ENCODE measurements at regions of chr7 and their contacts with region 1.

Region 1: GRCh38 chr7:128425850-128426249 is 16.1 kb upstream of the IMPDH1 start:
- DNase-seq: peak in 1 of 2 experiments; percentile 97
- H3K4me3 ChIP-seq: no peak overlapping the region
- H3K27ac ChIP-seq: no peak overlapping the region
- H3K4me1 ChIP-seq: peaks cover 0 to 3% (median 0%) of the 10 kb centered on the region in 4 experiments; a peak in 1 of 7 replicates
- H3K27me3 ChIP-seq: no peaks in the 10 kb centered on the region
- CTCF ChIP-seq: peak; percentile 92 to 95 (median 93)
- EP300 ChIP-seq: no peak
- POLR2A ChIP-seq: no peak
- RAD21 ChIP-seq: peak; percentile 86 to 88

Region 2: GRCh38 chr7:128343554-128344430 is 82.1 kb before region 1 on chr7 and contains the start of gene RBM28:
- CTCF ChIA-PET with region 1: interaction called, 71 read pairs
- POLR2A ChIA-PET with region 1: interaction called, 4 read pairs
- DNase-seq: peak; percentile 65 to 95
- H3K4me3 ChIP-seq: peak within 1 kb of the TSS; percentile 67 to 90 (median 88)
- H3K27ac ChIP-seq: peak within 1 kb of the TSS; percentile 90
- H3K4me1 ChIP-seq: peaks cover 0 to 5% (median 4%) of the 10 kb centered on the region in 4 experiments; a peak in 3 of 7 replicates
- H3K27me3 ChIP-seq: peaks cover under 1 to 7% (median 2%) of the 10 kb centered on the region in 4 experiments; a peak in 6 of 7 replicates
- CTCF ChIP-seq: no peak
- EP300 ChIP-seq: no peak
- POLR2A ChIP-seq: peak; percentile 85 to 91
- RAD21 ChIP-seq: 0 out of 4 replicates have a peak, but pooled peaks of 1 of the 2 experiments have one; percentile 9
- total RNA-seq, gene RBM28: 65.3 and 68.0 TPM in 2 replicates

Region 3: GRCh38 chr7:128387216-128388144 is 38.4 kb before region 1 on chr7:
- CTCF ChIA-PET with region 1: interaction called, 87 read pairs
- POLR2A ChIA-PET with region 1: no interaction called
- DNase-seq: peak; percentile 78 to 96
- H3K4me3 ChIP-seq: no peak overlapping the region; a peak in 1 of 8 replicates
- H3K27ac ChIP-seq: no peak overlapping the region
- H3K4me1 ChIP-seq: peaks cover 0 to 13% (median 11%) of the 10 kb centered on the region in 4 experiments; a peak in 6 of 7 replicates
- H3K27me3 ChIP-seq: peaks cover 0 to 6% (median 0%) of the 10 kb centered on the region in 4 experiments; a peak in 2 of 7 replicates
- CTCF ChIP-seq: peak; percentile 84 to 95 (median 93)
- EP300 ChIP-seq: no peak
- POLR2A ChIP-seq: no peak
- RAD21 ChIP-seq: peak; percentile 81 to 86

Region 4: GRCh38 chr7:128415217-128415785 is 10.5 kb before region 1 on chr7:
- CTCF ChIA-PET with region 1: interaction called, 348 read pairs
- POLR2A ChIA-PET with region 1: interaction called, 3 read pairs
- DNase-seq: no peak
- H3K4me3 ChIP-seq: no peak overlapping the region
- H3K27ac ChIP-seq: no peak overlapping the region
- H3K4me1 ChIP-seq: 0 out of 7 replicates have a peak, but pooled peaks cover 0 to 3% (median 0%) of the 10 kb centered on the region in 4 experiments
- H3K27me3 ChIP-seq: peaks cover 2 to 23% (median 10%) of the 10 kb centered on the region in 4 experiments; a peak in 6 of 7 replicates
- CTCF ChIP-seq: no peak
- EP300 ChIP-seq: no peak
- POLR2A ChIP-seq: no peak
- RAD21 ChIP-seq: no peak

Region 5: GRCh38 chr7:128455551-128456254 is 29.9 kb after region 1 on chr7 and contains the start of gene HILPDA:
- CTCF ChIA-PET with region 1: interaction called, 477 read pairs
- POLR2A ChIA-PET with region 1: interaction called, 15 read pairs
- DNase-seq: peak in 1 of 2 experiments; percentile 93
- H3K4me3 ChIP-seq: peak within 1 kb of the TSS; percentile 96 to 100 (median 100)
- H3K27ac ChIP-seq: peak within 1 kb of the TSS; percentile 93
- H3K4me1 ChIP-seq: peaks cover 9 to 20% (median 14%) of the 10 kb centered on the region in 4 experiments
- H3K27me3 ChIP-seq: no peaks in the 10 kb centered on the region; a peak in 2 of 7 replicates
- CTCF ChIP-seq: no peak
- EP300 ChIP-seq: no peak
- POLR2A ChIP-seq: peak; percentile 86 to 96
- RAD21 ChIP-seq: peak in 1 of 2 experiments; percentile 2; a peak in 1 of 4 replicates
- total RNA-seq, gene HILPDA: 33.9 and 35.6 TPM in 2 replicates

Region 6: GRCh38 chr7:128940494-128941322 is 514.9 kb after region 1 on chr7:
- CTCF ChIA-PET with region 1: no interaction called
- POLR2A ChIA-PET with region 1: no interaction called
- DNase-seq: peak in 1 of 2 experiments; percentile 50
- H3K4me3 ChIP-seq: no peak overlapping the region
- H3K27ac ChIP-seq: no peak overlapping the region
- H3K4me1 ChIP-seq: peaks cover 0 to 7% (median 3%) of the 10 kb centered on the region in 4 experiments; a peak in 2 of 7 replicates
- H3K27me3 ChIP-seq: peaks cover 24 to 49% (median 37%) of the 10 kb centered on the region in 4 experiments
- CTCF ChIP-seq: no peak
- EP300 ChIP-seq: no peak
- POLR2A ChIP-seq: no peak
- RAD21 ChIP-seq: no peak